MCF 10A (cell line): ENCODE measurements at regions of chr20 and their contacts with region 1.

Region 1: GRCh38 chr20:40990542-40991120 is 38.0 kb upstream of the TOP1 start:
- DNase-seq: peak; percentile 91
- H3K4me3 Mint-ChIP-seq: no peak overlapping the region
- H3K27ac Mint-ChIP-seq: peak overlapping the region; percentile 88
- H3K4me1 Mint-ChIP-seq: peaks cover 15% of the 10 kb centered on the region
- H3K27me3 Mint-ChIP-seq: no peaks in the 10 kb centered on the region
- CTCF ChIP-seq: peak; percentile 71

Region 2: DNA sequence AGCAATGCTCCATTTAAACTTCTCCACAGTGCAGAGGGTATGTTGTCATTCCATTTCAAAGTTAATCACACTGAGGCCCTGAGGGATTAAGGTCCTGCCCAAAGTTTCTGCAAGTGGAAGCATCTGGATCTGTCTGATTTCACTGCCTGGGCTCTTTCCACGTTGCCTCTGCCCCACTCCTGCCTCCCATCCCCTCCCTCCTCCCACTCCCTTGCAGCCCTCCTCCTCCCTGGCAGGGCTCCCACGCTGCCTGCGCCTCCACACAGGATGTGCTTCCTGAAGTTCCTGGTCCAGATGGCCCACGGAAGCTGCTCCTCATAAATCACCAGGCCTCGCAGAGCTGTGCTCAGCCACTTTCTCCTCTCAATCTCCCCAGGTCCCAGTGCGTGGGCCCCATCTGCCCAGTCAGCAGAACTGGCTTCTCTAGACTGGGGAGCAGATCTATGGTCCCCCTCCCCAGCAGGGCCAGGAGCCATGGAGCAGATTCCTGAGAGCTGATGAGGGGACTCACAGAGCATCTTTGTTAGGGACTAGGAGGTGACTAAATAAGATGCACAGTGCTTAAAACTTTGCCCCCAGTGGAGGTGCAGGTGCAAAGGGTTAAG is 236.2 kb before region 1 on chr20:
- CTCF ChIA-PET with region 1: no interaction called
- POLR2A ChIA-PET with region 1: no interaction called
- intact Hi-C with region 1: no loop called
- DNase-seq: no peak
- H3K4me3 Mint-ChIP-seq: no peak overlapping the region
- H3K27ac Mint-ChIP-seq: no peak overlapping the region
- H3K4me1 Mint-ChIP-seq: peaks cover 11% of the 10 kb centered on the region
- H3K27me3 Mint-ChIP-seq: no peaks in the 10 kb centered on the region
- CTCF ChIP-seq: no peak

Region 3: DNA sequence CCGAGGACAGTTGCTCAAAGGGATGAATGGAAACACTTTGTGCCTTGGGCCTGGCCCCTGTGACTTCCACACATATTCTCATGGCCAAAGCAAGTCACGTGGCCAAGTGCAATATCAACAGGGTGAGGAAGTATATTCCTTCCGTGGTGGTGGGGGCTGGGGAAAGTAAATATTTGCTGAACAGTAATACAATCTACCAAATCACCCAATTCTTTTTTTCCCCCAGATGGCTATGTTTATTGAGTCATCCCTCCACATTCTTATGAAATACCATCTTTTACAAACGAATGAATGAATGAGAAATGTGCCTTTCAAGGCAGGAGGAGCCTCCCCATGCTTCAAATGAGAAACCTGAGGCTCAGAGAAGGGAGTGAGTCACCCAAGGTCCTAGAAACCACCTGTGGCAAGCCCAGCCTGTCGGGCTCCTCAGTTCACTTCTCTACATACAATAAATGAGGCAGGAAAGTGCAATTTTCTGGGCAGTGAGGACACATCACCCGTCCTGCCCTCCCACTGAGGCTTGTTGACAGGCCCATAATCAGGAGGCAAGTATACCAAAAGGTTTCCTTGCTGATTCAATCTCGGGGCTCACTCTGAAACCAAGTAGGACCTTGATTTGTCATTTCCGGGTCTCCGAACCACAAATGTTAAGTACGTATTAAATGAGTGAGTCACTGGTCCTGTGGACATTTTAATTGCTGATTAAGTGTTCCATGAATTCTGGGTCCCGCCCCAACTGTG is 12.7 kb after region 1 on chr20:
- CTCF ChIA-PET with region 1: interaction called, 68 read pairs
- POLR2A ChIA-PET with region 1: interaction called, 37 read pairs
- intact Hi-C with region 1: no loop called
- DNase-seq: peak; percentile 99
- H3K4me3 Mint-ChIP-seq: peak overlapping the region; percentile 79
- H3K27ac Mint-ChIP-seq: peak overlapping the region; percentile 99
- H3K4me1 Mint-ChIP-seq: peaks cover 38% of the 10 kb centered on the region
- H3K27me3 Mint-ChIP-seq: no peaks in the 10 kb centered on the region
- CTCF ChIP-seq: no peak

Region 4: GRCh38 chr20:41028348-41029148 is 37.9 kb after region 1 on chr20 and contains the start of gene TOP1:
- CTCF ChIA-PET with region 1: interaction called, 37 read pairs
- POLR2A ChIA-PET with region 1: interaction called, 29 read pairs
- intact Hi-C with region 1: loop called (anchors 1 kb)
- DNase-seq: peak; percentile 99
- H3K4me3 Mint-ChIP-seq: peak within 1 kb of the TSS; percentile 94
- H3K27ac Mint-ChIP-seq: peak within 1 kb of the TSS; percentile 100
- H3K4me1 Mint-ChIP-seq: peaks cover 41% of the 10 kb centered on the region
- H3K27me3 Mint-ChIP-seq: no peaks in the 10 kb centered on the region
- CTCF ChIP-seq: no peak
- total RNA-seq, gene TOP1: 141 and 174 TPM in 2 replicates

Region 5: GRCh38 chr20:41057999-41058896 is 67.6 kb after region 1 on chr20:
- CTCF ChIA-PET with region 1: interaction called, 22 read pairs
- POLR2A ChIA-PET with region 1: interaction called, 3 read pairs
- intact Hi-C with region 1: no loop called
- DNase-seq: peak; percentile 68
- H3K4me3 Mint-ChIP-seq: no peak overlapping the region
- H3K27ac Mint-ChIP-seq: no peak overlapping the region
- H3K4me1 Mint-ChIP-seq: peaks cover 42% of the 10 kb centered on the region
- H3K27me3 Mint-ChIP-seq: no peaks in the 10 kb centered on the region
- CTCF ChIP-seq: no peak

Region 6: GRCh38 chr20:41078329-41078728 is 87.7 kb after region 1 on chr20:
- CTCF ChIA-PET with region 1: interaction called, 248 read pairs
- POLR2A ChIA-PET with region 1: interaction called, 11 read pairs
- intact Hi-C with region 1: loop called (anchors 1 kb)
- DNase-seq: peak; percentile 50
- H3K4me3 Mint-ChIP-seq: no peak overlapping the region
- H3K27ac Mint-ChIP-seq: peak overlapping the region; percentile 24
- H3K4me1 Mint-ChIP-seq: peaks cover 22% of the 10 kb centered on the region
- H3K27me3 Mint-ChIP-seq: no peaks in the 10 kb centered on the region
- CTCF ChIP-seq: peak; percentile 32

Region 7: GRCh38 chr20:41119546-41120235 is 129.1 kb after region 1 on chr20:
- CTCF ChIA-PET with region 1: interaction called, 13 read pairs
- POLR2A ChIA-PET with region 1: interaction called, 3 read pairs
- intact Hi-C with region 1: no loop called
- DNase-seq: no peak
- H3K4me3 Mint-ChIP-seq: no peak overlapping the region
- H3K27ac Mint-ChIP-seq: no peak overlapping the region
- H3K4me1 Mint-ChIP-seq: peaks cover 14% of the 10 kb centered on the region
- H3K27me3 Mint-ChIP-seq: no peaks in the 10 kb centered on the region
- CTCF ChIP-seq: no peak